ENCODE measurements at regions of chr5 and their contacts with region 1.

Region 1: DNA sequence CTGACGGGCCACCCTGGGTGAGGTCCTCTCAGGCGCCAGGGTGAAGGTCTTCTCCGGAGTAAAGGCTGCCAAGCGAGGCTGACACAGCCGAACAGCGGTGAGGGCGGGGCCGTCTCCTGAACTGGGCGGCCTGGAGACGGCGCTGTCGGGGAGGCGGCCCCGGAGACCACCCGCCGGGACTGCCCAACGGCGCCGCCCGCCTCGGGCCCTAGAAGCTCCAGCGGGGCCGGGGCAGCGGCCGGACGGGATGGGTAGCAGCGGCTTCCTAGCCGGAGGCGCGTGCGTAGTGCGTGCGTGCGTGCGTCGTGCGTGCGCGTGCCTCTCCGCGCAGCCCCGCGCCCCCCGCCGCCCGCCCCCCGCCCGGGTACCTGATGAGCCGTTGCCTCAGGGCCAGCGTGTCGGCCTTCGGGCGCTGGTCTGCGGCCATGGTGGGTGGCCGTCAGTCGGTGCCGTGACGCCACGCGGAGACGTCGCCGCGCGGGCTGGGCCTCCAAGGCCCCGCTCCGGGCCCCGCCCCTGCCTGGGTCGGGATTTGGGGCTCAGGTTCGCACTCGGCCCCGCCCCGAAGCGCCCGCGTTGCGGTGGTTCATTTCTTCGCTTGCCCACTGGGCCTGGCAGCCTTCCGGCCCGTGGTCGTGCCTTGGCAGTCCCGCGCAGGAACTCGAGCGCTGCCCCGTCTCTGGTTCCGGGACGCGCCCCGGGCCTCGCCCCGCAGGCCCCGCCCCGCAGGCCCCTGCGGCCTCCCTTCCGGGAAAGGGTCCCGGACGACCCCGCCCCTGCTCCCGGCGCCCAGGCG is at the start of gene PHYKPL:
- DNase-seq: peak; percentile 81
- H3K4me3 Mint-ChIP-seq: peak within 1 kb of the TSS; percentile 89
- H3K27ac Mint-ChIP-seq: peak within 1 kb of the TSS; percentile 84
- H3K4me1 Mint-ChIP-seq: peaks cover 82% of the 10 kb centered on the region
- H3K27me3 Mint-ChIP-seq: no peaks in the 10 kb centered on the region
- total RNA-seq, gene PHYKPL: 106 to 112 TPM

Region 2: DNA sequence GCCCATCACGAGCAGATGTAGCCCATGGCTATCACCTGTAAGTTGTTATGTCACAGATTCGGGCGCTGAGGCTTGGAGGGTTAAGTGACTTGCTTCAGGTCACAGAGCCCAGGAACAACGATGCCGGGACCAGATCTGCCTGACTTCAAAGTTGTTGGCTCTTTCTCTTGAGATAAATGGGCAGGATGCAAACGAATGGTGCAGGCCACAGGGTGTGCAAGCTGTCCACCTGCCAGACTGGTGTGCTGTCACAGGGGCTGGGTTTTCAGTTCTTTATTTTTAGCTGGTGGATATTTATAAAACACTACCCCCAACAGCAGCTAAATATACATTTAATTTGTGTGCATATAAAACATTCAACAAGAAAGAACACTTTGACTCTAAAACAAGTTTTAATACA is 17.9 kb after region 1 on chr5:
- CTCF ChIA-PET with region 1: interaction called, 11 read pairs
- POLR2A ChIA-PET with region 1: interaction called, 4 read pairs
- DNase-seq: no peak
- H3K4me3 Mint-ChIP-seq: no peak overlapping the region
- H3K27ac Mint-ChIP-seq: no peak overlapping the region
- H3K4me1 Mint-ChIP-seq: peaks cover 21% of the 10 kb centered on the region
- H3K27me3 Mint-ChIP-seq: no peaks in the 10 kb centered on the region

Region 3: DNA sequence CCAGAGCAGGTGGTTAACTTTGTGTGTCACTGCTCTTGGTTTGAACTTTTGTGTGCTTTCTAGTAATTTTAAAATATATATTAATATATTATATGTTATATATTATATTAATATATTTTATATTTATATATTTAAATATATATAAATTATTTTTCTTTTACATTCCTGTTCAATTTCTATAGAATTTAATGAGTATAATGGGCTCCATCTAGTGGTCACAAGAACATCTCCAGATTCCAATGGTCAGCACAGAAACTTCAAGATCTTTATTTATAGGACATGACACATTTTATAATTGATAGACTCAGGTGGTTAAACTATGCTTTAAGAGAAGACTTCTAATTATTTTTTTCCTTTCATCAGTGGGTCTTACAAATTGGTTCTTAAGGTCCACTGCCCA is 318.7 kb after region 1 on chr5:
- CTCF ChIA-PET with region 1: interaction called, 13 read pairs
- POLR2A ChIA-PET with region 1: no interaction called
- DNase-seq: no peak
- H3K4me3 Mint-ChIP-seq: no peak overlapping the region
- H3K27ac Mint-ChIP-seq: no peak overlapping the region
- H3K4me1 Mint-ChIP-seq: no peaks in the 10 kb centered on the region
- H3K27me3 Mint-ChIP-seq: peaks cover 4% of the 10 kb centered on the region

Measured in activated CD4-positive, alpha-beta memory T cell treated with anti-CD3 and anti-CD28 coated beads, Interleukin-2, amount 10 ng/mL, durations not matched to agents 7 days and 5 days (primary cell).